Activated CD4-positive, alpha-beta T cell treated with anti-CD3 and anti-CD28 coated beads, Interleukin-2, amount 10 ng/mL, durations not matched to agents 7 days and 5 days (primary cell): ENCODE measurements at regions of chr4 and their contacts with region 1.

Region 1: DNA sequence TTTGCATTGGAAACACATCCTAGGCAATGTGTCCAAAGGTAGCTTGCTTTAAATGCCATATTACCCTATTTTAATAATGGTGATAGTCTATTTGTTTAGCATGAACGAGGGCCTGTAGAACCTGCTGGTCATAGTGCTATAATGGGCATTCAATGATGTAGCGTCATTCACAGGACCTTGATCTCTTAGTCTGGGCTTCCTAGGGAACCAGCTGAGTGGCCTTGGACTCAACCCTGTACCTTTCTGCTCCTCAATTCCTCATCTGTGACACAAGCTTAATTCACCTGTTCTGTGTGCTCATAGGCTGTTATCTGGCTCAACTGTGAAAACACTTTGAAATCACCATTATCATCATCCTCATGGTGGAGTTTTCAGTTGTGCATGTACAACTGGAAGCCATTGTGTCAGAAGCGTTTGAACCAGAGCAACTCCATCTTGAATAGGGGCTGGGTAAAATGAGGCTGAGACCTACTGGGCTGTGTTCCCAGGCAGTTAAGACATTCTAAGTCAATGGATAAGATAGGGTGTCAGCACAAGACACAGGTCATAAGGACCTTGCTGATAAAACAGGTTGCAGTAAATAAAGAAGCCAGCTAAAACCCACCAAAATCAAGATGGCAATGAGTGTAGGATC is 346.8 kb upstream of the KLF3 start:
- DNase-seq: no peak
- H3K4me3 Mint-ChIP-seq: no peak overlapping the region
- H3K27ac Mint-ChIP-seq: no peak overlapping the region
- H3K4me1 Mint-ChIP-seq: peaks cover 61% of the 10 kb centered on the region
- H3K27me3 Mint-ChIP-seq: peaks cover 2% of the 10 kb centered on the region

Region 2: DNA sequence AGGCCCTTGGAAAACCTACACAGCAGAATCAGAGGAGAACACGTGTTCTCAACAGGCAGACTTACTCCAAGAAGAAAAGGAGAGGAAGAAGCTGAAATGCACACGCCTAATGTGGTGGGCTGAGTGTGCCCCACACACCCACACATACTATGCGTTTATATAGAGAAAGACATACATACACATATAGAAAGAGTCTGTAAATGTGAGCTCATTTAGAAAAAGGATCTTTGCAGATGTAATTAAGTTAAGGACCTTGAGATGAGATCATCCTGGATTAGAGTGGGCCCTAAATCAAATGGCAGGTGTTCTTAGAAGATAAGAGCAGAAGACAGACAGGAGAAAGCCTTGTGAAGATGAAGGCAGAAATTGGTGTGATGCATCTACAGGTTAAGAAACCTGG is 259.6 kb after region 1 on chr4:
- CTCF ChIA-PET with region 1: no interaction called
- POLR2A ChIA-PET with region 1: interaction called, 14 read pairs
- DNase-seq: no peak
- H3K4me3 Mint-ChIP-seq: no peak overlapping the region
- H3K27ac Mint-ChIP-seq: no peak overlapping the region
- H3K4me1 Mint-ChIP-seq: no peaks in the 10 kb centered on the region
- H3K27me3 Mint-ChIP-seq: peaks cover 4% of the 10 kb centered on the region